IMR-90 (cell line): ENCODE measurements at regions of chrX and their contacts with region 1.

Region 1: DNA sequence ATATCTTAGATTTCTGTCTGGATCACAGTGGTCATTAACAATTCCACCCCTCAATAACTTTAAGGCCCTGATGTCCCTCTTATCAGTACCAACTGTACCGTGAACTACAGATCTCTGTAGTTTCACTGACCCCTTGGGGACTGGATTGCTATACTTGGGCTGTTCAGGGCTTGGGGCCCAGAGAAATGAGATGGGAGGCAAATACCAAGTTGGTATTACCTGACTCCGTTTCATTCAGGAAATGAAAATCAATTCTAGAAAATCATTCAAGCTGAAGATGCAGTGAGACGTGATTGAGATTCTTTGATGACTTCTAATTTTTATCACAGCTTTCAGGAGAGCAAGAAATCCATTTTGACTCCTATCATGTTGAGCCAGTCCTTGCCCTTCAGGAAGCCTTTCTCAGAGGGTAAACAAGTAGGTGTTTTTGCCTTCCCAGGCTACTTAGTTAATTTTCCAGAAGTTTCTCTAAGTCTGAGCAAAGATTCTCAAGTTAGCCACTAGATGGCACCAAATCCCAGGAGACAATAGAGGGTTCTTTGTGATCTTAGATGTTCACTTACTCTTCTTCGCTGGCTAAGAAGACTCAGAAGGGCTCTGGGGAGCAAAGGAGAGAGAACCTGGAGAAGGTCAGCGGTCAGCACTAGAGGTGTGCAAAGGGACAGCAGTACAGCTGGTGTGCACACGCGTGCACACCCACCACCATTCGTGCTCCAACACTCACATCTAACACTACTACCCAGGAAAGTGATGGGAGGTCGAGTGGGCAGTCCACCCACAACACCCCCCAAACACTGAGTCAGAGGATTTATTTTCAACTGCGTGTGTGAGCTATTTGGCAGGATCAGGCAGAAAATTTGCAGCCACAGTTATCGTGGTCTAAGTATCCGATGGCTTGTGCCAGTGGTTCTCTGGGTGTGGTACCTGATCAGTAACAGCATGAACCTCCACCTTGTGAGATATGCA is 7.4 kb downstream of the HNRNPH2 start:
- DNase-seq: peak; percentile 84
- ATAC-seq: peak; percentile 73
- H3K4me3 ChIP-seq: no peak overlapping the region
- H3K27ac ChIP-seq: no peak overlapping the region
- H3K4me1 ChIP-seq: peaks cover 4% of the 10 kb centered on the region; the same call in 1 of the 2 replicates
- H3K27me3 ChIP-seq: peaks cover 2% of the 10 kb centered on the region; the same call in 1 of the 2 replicates
- CTCF ChIP-seq: peak; percentile 77
- POLR2A ChIP-seq: no peak
- RAD21 ChIP-seq: peak; percentile 77

Region 2: GRCh38 chrX:101229170-101229569 is 186.3 kb before region 1 on chrX:
- CTCF ChIA-PET with region 1: no interaction called
- POLR2A ChIA-PET with region 1: no interaction called
- dilution Hi-C with region 1: no loop called
- in situ Hi-C with region 1: no loop called
- intact Hi-C with region 1: no loop called
- DNase-seq: peak; percentile 82
- ATAC-seq: peak; percentile 85
- H3K4me3 ChIP-seq: no peak overlapping the region
- H3K27ac ChIP-seq: no peak overlapping the region
- H3K4me1 ChIP-seq: peaks cover 13% of the 10 kb centered on the region
- H3K27me3 ChIP-seq: no peaks in the 10 kb centered on the region; the same call in 1 of the 2 replicates
- CTCF ChIP-seq: no peak
- POLR2A ChIP-seq: no peak
- RAD21 ChIP-seq: no peak

Region 3: DNA sequence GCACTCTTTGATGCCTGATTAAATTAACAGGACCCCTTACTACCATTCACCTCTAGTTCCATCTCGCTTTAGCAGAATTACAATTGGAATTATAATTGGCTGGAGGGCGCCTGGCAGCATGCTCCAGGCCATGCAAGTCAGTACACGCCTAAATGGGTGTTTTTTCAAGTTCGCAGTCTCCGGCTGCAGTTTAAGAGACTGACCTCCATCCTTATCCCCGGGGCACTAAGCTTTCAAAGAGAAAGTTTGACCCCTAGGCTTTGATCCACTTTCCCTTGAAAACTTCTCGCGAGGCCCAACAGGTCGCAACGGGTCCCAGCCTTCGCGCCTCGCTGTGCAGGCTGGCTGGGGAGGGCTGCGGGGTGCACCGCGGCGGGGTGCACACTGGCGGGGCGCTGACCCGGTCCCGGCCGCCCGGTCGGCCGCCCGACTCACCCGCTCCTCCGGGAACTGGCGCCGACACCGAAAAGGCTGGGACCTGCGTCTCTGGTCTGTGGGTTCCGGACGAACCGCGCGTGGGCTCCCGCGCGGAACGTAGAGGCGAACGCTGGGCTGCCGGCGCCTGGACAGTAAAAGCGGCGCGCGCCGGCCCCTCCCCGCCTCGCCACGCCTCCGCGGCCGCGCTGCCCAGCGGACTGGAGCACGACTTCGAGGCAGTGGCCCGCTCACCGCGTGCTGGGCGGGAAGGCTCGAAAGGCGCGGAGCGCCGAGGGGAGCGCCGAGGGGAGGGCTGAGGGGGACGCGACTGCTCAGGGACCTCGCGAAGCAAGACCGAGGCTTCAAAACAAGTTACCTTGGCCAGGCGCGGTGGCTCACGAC is 124.5 kb before region 1 on chrX and contains the start of gene TAF7L:
- CTCF ChIA-PET with region 1: no interaction called
- POLR2A ChIA-PET with region 1: no interaction called
- dilution Hi-C with region 1: no loop called
- in situ Hi-C with region 1: no loop called
- intact Hi-C with region 1: no loop called
- DNase-seq: no peak
- ATAC-seq: peak; percentile 54
- H3K4me3 ChIP-seq: 0 out of 2 replicates have a peak within 1 kb of the TSS, but pooled peaks have one; percentile 2
- H3K27ac ChIP-seq: no peak within 1 kb of the TSS
- H3K4me1 ChIP-seq: no peaks in the 10 kb centered on the region
- H3K27me3 ChIP-seq: no peaks in the 10 kb centered on the region
- CTCF ChIP-seq: no peak
- POLR2A ChIP-seq: no peak
- RAD21 ChIP-seq: no peak
- total RNA-seq, gene TAF7L: 0.18 and 0.28 TPM in 2 replicates

Region 4: GRCh38 chrX:101462892-101463291 is 47.4 kb after region 1 on chrX:
- CTCF ChIA-PET with region 1: no interaction called
- POLR2A ChIA-PET with region 1: no interaction called
- dilution Hi-C with region 1: no loop called
- in situ Hi-C with region 1: no loop called
- intact Hi-C with region 1: no loop called
- DNase-seq: peak; percentile 24
- ATAC-seq: peak; percentile 70
- H3K4me3 ChIP-seq: no peak overlapping the region
- H3K27ac ChIP-seq: no peak overlapping the region
- H3K4me1 ChIP-seq: no peaks in the 10 kb centered on the region
- H3K27me3 ChIP-seq: no peaks in the 10 kb centered on the region
- CTCF ChIP-seq: peak; percentile 43
- POLR2A ChIP-seq: no peak
- RAD21 ChIP-seq: peak; percentile 39

Region 5: GRCh38 chrX:101483705-101484104 is 68.2 kb after region 1 on chrX:
- CTCF ChIA-PET with region 1: no interaction called
- POLR2A ChIA-PET with region 1: no interaction called
- dilution Hi-C with region 1: no loop called
- in situ Hi-C with region 1: no loop called
- intact Hi-C with region 1: loop called (anchors 5 kb)
- DNase-seq: no peak
- ATAC-seq: no peak
- H3K4me3 ChIP-seq: no peak overlapping the region
- H3K27ac ChIP-seq: no peak overlapping the region
- H3K4me1 ChIP-seq: no peaks in the 10 kb centered on the region
- H3K27me3 ChIP-seq: no peaks in the 10 kb centered on the region
- CTCF ChIP-seq: no peak
- POLR2A ChIP-seq: no peak
- RAD21 ChIP-seq: no peak

Region 6: GRCh38 chrX:101550362-101550750 is 134.9 kb after region 1 on chrX and contains the start of gene ARMCX1:
- CTCF ChIA-PET with region 1: no interaction called
- POLR2A ChIA-PET with region 1: no interaction called
- dilution Hi-C with region 1: no loop called
- in situ Hi-C with region 1: no loop called
- intact Hi-C with region 1: loop called (anchors 2 kb)
- DNase-seq: peak; percentile 74
- ATAC-seq: peak; percentile 87
- H3K4me3 ChIP-seq: peak within 1 kb of the TSS; percentile 80
- H3K27ac ChIP-seq: peak within 1 kb of the TSS; percentile 88
- H3K4me1 ChIP-seq: no peaks in the 10 kb centered on the region
- H3K27me3 ChIP-seq: no peaks in the 10 kb centered on the region; the same call in 1 of the 2 replicates
- CTCF ChIP-seq: no peak
- POLR2A ChIP-seq: peak; percentile 85
- RAD21 ChIP-seq: no peak
- total RNA-seq, gene ARMCX1: 22.9 and 31.1 TPM in 2 replicates

Region 7: GRCh38 chrX:101595739-101596419 is 180.4 kb after region 1 on chrX:
- CTCF ChIA-PET with region 1: no interaction called
- POLR2A ChIA-PET with region 1: no interaction called
- dilution Hi-C with region 1: no loop called
- in situ Hi-C with region 1: no loop called
- intact Hi-C with region 1: loop called (anchors 5 kb)
- DNase-seq: peak; percentile 75
- ATAC-seq: peak; percentile 87
- H3K4me3 ChIP-seq: no peak overlapping the region
- H3K27ac ChIP-seq: no peak overlapping the region
- H3K4me1 ChIP-seq: no peaks in the 10 kb centered on the region
- H3K27me3 ChIP-seq: peaks cover 19% of the 10 kb centered on the region
- CTCF ChIP-seq: peak; percentile 78
- POLR2A ChIP-seq: no peak
- RAD21 ChIP-seq: peak; percentile 85

Region 8: GRCh38 chrX:101799387-101799786 is 383.9 kb after region 1 on chrX:
- CTCF ChIA-PET with region 1: no interaction called
- POLR2A ChIA-PET with region 1: no interaction called
- dilution Hi-C with region 1: no loop called
- in situ Hi-C with region 1: loop called (anchors 5 kb)
- intact Hi-C with region 1: loop called (anchors 1 kb)
- DNase-seq: peak; percentile 80
- ATAC-seq: peak; percentile 100
- H3K4me3 ChIP-seq: no peak overlapping the region
- H3K27ac ChIP-seq: no peak overlapping the region
- H3K4me1 ChIP-seq: no peaks in the 10 kb centered on the region
- H3K27me3 ChIP-seq: 0 out of 2 replicates have a peak, but pooled peaks cover 2% of the 10 kb centered on the region
- CTCF ChIP-seq: peak; percentile 70
- POLR2A ChIP-seq: no peak
- RAD21 ChIP-seq: peak; percentile 47